ENCODE measurements at regions of chr7 and their contacts with region 1.

Region 1: DNA sequence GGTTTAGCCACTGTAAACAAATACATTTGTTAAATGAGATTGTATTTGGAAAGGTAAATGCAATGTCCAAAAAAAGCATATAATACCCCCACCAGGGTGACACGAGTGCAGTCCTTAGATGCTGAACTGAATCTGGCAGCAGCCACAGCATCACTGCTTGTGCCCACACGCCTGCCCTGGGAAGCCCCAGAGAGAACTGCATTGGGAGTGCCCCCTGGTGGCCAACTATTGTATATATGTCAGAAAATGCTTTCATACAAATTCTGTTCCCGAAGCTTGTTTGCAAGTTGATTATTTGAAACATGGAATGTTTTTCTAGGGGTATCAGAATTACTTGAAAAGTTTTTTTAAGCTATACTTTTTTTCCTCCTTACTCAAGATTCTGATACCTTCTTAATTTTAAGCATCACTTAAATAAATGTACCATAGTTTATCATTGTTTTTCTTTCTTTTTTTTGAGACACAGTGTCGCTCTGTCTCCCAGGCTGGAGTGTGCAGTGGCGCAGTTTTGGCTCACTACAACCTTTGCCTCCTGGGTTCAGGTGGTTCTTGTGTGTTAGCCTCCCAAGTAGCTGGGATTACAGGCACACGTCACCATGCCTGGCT is 50.1 kb downstream of the LANCL2 start:
- DNase-seq: peak; percentile 77 to 88
- H3K4me3 ChIP-seq: no peak overlapping the region
- H3K27ac ChIP-seq: no peak overlapping the region
- H3K4me1 ChIP-seq: peaks cover 6 to 8% of the 10 kb centered on the region in 2 donors
- H3K27me3 ChIP-seq: no peaks in the 10 kb centered on the region
- CTCF ChIP-seq: peak; percentile 64 to 93 (median 74)
- POLR2A ChIP-seq: no peak

Region 2: GRCh38 chr7:55280031-55280454 is 135.2 kb before region 1 on chr7:
- intact Hi-C with region 1: loop called (anchors 5 kb)
- DNase-seq: peak; percentile 58 to 67
- H3K4me3 ChIP-seq: no peak overlapping the region
- H3K27ac ChIP-seq: no peak overlapping the region
- H3K4me1 ChIP-seq: no peaks in the 10 kb centered on the region
- H3K27me3 ChIP-seq: no peaks in the 10 kb centered on the region
- CTCF ChIP-seq: peak; percentile 17 to 81 (median 63)
- POLR2A ChIP-seq: no peak

Region 3: DNA sequence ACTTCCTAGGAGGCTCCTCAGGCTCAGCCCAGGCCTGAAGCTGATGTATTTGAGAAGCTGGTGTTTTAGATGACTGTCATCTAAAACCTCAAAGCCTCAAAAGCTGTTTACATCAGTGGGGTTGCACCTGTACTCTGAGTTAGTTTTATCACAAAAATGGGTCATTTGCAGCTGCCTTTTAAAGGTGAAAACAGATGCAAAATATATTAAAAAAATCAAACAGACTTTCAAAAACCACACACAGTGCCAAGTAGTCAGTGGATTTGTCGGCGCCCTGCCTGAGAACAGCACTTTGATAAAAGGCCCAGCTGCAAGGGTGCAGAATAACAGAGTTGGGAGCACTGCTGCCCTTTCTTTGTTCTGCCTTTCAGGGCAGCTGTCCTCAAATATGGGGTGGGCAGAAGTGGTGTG is 54.0 kb after region 1 on chr7:
- intact Hi-C with region 1: no loop called
- DNase-seq: no peak
- H3K4me3 ChIP-seq: no peak overlapping the region
- H3K27ac ChIP-seq: no peak overlapping the region
- H3K4me1 ChIP-seq: no peaks in the 10 kb centered on the region
- H3K27me3 ChIP-seq: no peaks in the 10 kb centered on the region
- CTCF ChIP-seq: no peak
- POLR2A ChIP-seq: no peak

Measured in thyroid gland (tissue), 4 donors.